ENCODE measurements at regions of chr1 and their contacts with region 1.

Region 1: DNA sequence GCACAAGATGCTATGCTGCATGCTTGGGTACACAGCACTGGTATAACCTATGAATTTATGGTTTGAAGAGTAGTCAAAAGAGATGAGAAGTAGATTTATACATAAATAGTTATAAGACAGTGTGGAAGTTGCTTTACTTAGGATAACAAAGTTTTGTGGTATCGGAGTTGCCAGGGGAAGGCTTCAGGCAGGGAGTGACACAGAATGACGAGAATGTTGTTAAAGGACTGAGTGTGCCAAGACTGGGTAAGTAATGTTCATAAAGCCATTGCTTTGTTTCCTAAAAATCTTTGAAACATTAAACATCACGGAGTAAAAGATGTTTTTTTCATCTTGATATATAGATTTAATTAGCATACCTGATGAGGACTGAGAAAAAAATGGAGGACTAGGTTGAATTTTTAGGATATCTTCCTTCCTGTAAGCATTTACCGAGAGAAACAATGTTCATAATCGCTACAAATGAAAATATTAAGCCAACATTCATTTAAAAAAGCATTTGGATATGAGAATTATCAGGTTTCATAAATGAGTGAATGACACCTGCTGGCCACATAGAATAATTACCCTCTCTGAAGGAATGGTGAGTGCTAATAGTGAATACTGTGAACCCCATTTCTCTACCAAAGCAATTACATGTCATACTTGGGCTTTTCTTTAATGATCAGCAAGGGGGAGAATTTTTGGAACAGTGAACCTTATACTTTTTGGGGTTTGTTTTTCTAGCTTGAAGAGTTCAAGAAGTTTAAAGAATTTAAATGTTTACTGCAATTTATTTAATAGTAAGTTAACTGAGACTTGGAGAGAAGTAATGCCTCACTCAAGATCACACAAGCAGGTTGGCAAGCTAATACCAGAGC is 28.4 kb downstream of the EXTL2 start:
- DNase-seq: no peak
- H3K4me3 ChIP-seq: no peak overlapping the region
- H3K27ac ChIP-seq: no peak overlapping the region
- H3K4me1 ChIP-seq: no peaks in the 10 kb centered on the region
- H3K27me3 ChIP-seq: no peaks in the 10 kb centered on the region
- CTCF ChIP-seq: peak; percentile 59 to 75 (median 65)
- POLR2A ChIP-seq: no peak

Region 2: GRCh38 chr1:100404821-100405220 is 461.4 kb before region 1 on chr1:
- intact Hi-C with region 1: no loop called
- DNase-seq: no peak
- H3K4me3 ChIP-seq: no peak overlapping the region
- H3K27ac ChIP-seq: no peak overlapping the region
- H3K4me1 ChIP-seq: no peaks in the 10 kb centered on the region
- H3K27me3 ChIP-seq: no peaks in the 10 kb centered on the region
- CTCF ChIP-seq: no peak
- POLR2A ChIP-seq: no peak

Region 3: DNA sequence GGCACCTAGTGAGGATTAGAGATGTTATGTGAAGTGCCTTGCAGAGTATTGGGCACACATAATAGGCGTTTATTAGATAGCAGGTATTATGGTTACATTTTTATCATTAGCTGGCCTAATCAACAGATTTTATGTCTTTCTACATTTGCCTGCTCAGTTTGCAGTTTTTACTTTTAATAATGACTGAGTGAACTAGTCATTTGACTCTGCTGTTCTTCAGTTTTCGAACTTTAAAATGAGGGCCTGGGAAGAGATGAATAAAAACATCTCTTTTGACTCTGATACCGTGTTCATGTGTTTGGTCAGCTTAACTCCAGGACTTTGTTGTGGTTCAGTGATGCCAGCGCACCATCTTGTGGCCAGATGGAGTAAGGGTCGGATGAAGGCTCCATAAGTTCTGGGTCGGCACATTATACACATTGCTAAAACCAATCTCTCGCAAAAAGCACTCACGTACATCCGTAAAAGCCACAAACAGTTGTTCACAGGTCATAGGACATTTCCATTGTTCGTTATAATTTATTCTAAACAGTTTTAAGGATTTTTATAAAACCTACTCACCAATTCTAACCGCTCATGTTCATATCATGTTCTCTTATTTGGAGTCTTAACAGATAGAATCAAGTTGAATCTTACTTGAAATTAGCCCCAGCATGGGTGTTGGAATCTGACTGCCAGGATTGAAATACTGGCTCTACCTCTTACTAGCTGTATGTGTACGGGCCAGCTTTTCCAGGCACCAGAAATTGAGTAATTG is 406.7 kb before region 1 on chr1:
- intact Hi-C with region 1: loop called (anchors 5 kb)
- DNase-seq: peak; percentile 85
- H3K4me3 ChIP-seq: no peak overlapping the region
- H3K27ac ChIP-seq: no peak overlapping the region
- H3K4me1 ChIP-seq: peaks cover 4% of the 10 kb centered on the region
- H3K27me3 ChIP-seq: no peaks in the 10 kb centered on the region
- CTCF ChIP-seq: peak; percentile 70 to 78 (median 71)
- POLR2A ChIP-seq: no peak

Region 4: GRCh38 chr1:100606438-100606837 is 259.8 kb before region 1 on chr1:
- intact Hi-C with region 1: loop called (anchors 10 kb)
- DNase-seq: peak; percentile 49
- H3K4me3 ChIP-seq: no peak overlapping the region
- H3K27ac ChIP-seq: no peak overlapping the region
- H3K4me1 ChIP-seq: peaks cover 3% of the 10 kb centered on the region
- H3K27me3 ChIP-seq: no peaks in the 10 kb centered on the region
- CTCF ChIP-seq: peak in 2 of 3 experiments; percentile 18 to 45
- POLR2A ChIP-seq: no peak